Activated CD8-positive, alpha-beta T cell treated with anti-CD3 and anti-CD28 coated beads for 36 hours (primary cell): ENCODE measurements at regions of chr3 and their contacts with region 1.

Region 1: GRCh38 chr3:138923531-138923994 is 23.4 kb downstream of the FOXL2 start:
- DNase-seq: peak; percentile 93
- ATAC-seq: peak; percentile 93
- H3K4me3 Mint-ChIP-seq: no peak overlapping the region
- H3K27ac Mint-ChIP-seq: no peak overlapping the region
- H3K4me1 Mint-ChIP-seq: no peaks in the 10 kb centered on the region
- H3K27me3 Mint-ChIP-seq: peaks cover 4% of the 10 kb centered on the region
- CTCF ChIP-seq: peak; percentile 79

Region 2: GRCh38 chr3:138479438-138479863 is 444.1 kb before region 1 on chr3:
- CTCF ChIA-PET with region 1: interaction called, 15 read pairs
- POLR2A ChIA-PET with region 1: no interaction called
- intact Hi-C with region 1: loop called (anchors 10 kb)
- DNase-seq: peak; percentile 60
- ATAC-seq: peak; percentile 58
- H3K4me3 Mint-ChIP-seq: no peak overlapping the region
- H3K27ac Mint-ChIP-seq: no peak overlapping the region
- H3K4me1 Mint-ChIP-seq: no peaks in the 10 kb centered on the region
- H3K27me3 Mint-ChIP-seq: no peaks in the 10 kb centered on the region
- CTCF ChIP-seq: peak; percentile 58

Region 3: DNA sequence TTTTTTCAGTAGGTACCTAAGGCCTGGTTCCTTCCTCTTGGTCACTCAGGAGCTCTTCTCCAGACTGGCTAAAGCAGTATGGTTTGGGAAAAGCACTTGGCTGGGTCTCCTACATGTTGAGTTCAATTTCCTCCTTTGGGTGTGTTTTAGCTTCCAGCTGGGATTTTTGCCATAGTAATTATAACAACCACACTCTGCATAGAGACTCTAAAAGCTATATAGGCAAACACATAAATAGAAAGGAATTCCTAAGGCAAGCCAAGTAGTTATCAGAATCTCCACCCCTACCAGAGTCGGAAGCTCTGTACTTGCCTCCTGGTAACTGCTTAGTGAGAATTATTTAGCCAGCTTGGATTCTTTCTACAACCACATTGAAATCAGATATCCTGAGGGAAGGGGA is 25.3 kb before region 1 on chr3:
- CTCF ChIA-PET with region 1: interaction called, 25 read pairs
- POLR2A ChIA-PET with region 1: no interaction called
- intact Hi-C with region 1: no loop called
- DNase-seq: no peak
- ATAC-seq: no peak
- H3K4me3 Mint-ChIP-seq: no peak overlapping the region
- H3K27ac Mint-ChIP-seq: no peak overlapping the region
- H3K4me1 Mint-ChIP-seq: no peaks in the 10 kb centered on the region
- H3K27me3 Mint-ChIP-seq: no peaks in the 10 kb centered on the region
- CTCF ChIP-seq: no peak

Region 4: GRCh38 chr3:138941259-138941885 is 17.8 kb after region 1 on chr3:
- CTCF ChIA-PET with region 1: interaction called, 118 read pairs
- POLR2A ChIA-PET with region 1: interaction called, 3 read pairs
- intact Hi-C with region 1: no loop called
- DNase-seq: peak; percentile 58
- ATAC-seq: no peak
- H3K4me3 Mint-ChIP-seq: no peak overlapping the region
- H3K27ac Mint-ChIP-seq: no peak overlapping the region
- H3K4me1 Mint-ChIP-seq: peaks cover 44% of the 10 kb centered on the region
- H3K27me3 Mint-ChIP-seq: peaks cover 80% of the 10 kb centered on the region
- CTCF ChIP-seq: peak; percentile 35